Psoas muscle (tissue), 8 donors: ENCODE measurements at regions of chr22 and their contacts with region 1.

Region 1: DNA sequence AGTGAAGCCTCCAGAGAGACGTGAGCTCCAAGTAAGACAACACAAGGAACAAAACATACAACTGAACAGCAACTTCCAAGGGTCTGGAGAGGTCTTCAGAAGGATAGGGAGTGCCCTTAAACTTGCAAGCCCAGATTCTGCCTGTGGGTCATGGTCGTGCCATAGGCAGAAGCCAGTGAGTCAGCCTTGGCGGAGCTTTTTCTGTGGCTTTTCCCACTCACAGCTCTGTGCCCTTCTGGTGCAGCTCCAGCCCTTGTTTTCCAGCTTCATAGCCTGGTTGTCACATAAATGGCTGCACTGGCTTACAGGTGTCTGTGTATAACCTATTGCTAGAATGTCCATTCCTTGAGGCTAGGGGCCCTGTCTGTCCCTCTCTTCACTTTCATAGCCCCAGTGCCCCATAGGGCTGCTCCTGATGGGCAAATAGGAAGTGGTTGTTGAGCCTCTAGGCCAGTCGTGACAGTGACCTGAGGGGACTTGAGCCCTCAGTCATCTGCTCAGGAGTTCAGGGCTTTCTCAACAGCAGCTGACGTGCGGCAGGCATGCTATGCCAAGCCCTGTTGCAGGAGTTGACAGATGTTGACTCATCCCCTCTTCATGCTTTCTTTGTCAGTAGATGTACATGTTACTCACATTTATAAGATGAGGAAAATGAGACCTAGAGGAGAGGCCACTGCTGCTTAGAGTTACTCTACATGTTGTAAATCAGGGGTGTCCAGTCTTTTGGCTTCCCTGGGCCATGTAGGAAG is 7.4 kb downstream of the MED15 start:
- DNase-seq: peak; percentile 82 to 90
- ATAC-seq: peak; percentile 93 to 97 (median 94)
- H3K4me3 ChIP-seq: no peak overlapping the region
- H3K27ac ChIP-seq: peak overlapping the region; percentile 81
- H3K4me1 ChIP-seq: peaks cover 46% of the 10 kb centered on the region
- H3K27me3 ChIP-seq: no peaks in the 10 kb centered on the region
- CTCF ChIP-seq: no peak

Region 2: GRCh38 chr22:20531315-20532201 is 16.7 kb after region 1 on chr22:
- intact Hi-C with region 1: no loop called
- DNase-seq: peak; percentile 66 to 87
- ATAC-seq: peak; percentile 91 to 95 (median 92)
- H3K4me3 ChIP-seq: no peak overlapping the region
- H3K27ac ChIP-seq: peak overlapping the region; percentile 86
- H3K4me1 ChIP-seq: peaks cover 60% of the 10 kb centered on the region
- H3K27me3 ChIP-seq: no peaks in the 10 kb centered on the region
- CTCF ChIP-seq: no peak

Region 3: DNA sequence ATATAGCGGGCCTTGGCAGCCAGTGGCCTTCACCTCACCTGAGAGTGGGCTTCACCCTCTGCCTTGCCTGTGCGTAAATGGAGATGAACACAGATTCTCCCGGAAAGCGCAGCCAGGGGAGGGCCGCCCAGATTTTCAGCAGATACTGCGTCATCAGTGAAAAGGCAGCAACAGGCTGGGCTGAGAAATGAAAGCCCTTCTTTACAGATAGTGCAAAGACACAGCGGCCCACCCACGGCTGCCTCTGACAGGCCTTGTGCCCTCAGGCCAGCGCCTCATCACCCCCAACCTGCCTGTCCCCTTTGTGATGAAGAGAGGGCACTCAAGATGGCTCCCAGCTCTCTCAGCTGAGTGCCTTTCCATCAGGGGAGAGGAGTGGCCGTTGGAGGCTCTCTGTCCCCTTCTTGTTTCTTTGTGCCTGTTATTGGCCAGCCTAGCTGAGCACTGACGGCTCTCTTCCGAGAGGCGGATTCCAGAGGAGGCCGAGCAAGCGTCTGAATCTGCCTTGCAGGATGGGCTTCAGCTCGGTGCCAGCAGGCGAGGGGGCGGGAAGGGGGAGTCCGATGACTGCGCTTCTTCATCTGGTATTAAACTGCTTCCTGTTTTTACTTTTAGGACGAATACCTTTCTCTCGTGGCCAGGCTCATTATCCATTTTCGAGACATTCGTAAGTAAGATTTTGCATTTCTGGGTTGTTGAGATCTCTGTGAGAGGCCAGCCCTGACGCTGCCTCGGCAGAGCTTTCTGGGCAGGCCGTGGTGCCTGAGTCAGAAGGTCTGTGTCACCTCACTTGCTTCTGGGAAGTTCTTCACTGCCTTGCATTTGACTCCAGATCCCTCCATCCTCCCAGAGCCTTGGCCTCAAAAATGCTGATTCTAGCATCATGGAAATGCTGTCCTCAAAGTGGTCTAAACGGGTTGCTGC is 36.3 kb after region 1 on chr22:
- intact Hi-C with region 1: loop called (anchors 5 kb)
- DNase-seq: peak in 1 of 2 donors; percentile 58
- ATAC-seq: peak in 3 of 4 donors; percentile 23 to 35 (median 29)
- H3K4me3 ChIP-seq: no peak overlapping the region
- H3K27ac ChIP-seq: peak overlapping the region; percentile 93
- H3K4me1 ChIP-seq: peaks cover 93% of the 10 kb centered on the region
- H3K27me3 ChIP-seq: no peaks in the 10 kb centered on the region
- CTCF ChIP-seq: no peak

Region 4: GRCh38 chr22:20583471-20583922 is 68.7 kb after region 1 on chr22:
- intact Hi-C with region 1: no loop called
- DNase-seq: no peak
- ATAC-seq: no peak
- H3K4me3 ChIP-seq: no peak overlapping the region
- H3K27ac ChIP-seq: no peak overlapping the region
- H3K4me1 ChIP-seq: peaks cover 4% of the 10 kb centered on the region
- H3K27me3 ChIP-seq: no peaks in the 10 kb centered on the region
- CTCF ChIP-seq: no peak